ENCODE measurements at regions of chr16 and their contacts with region 1.

Region 1: GRCh38 chr16:64356267-64356666 is 765.6 kb downstream of the CDH11 start:
- DNase-seq: peak; percentile 87
- ATAC-seq: peak; percentile 91
- H3K4me3 ChIP-seq: no peak overlapping the region
- H3K27ac ChIP-seq: no peak overlapping the region
- H3K4me1 ChIP-seq: no peaks in the 10 kb centered on the region
- H3K27me3 ChIP-seq: no peaks in the 10 kb centered on the region
- CTCF ChIP-seq: no peak
- POLR2A ChIP-seq: no peak
- RAD21 ChIP-seq: no peak

Region 2: DNA sequence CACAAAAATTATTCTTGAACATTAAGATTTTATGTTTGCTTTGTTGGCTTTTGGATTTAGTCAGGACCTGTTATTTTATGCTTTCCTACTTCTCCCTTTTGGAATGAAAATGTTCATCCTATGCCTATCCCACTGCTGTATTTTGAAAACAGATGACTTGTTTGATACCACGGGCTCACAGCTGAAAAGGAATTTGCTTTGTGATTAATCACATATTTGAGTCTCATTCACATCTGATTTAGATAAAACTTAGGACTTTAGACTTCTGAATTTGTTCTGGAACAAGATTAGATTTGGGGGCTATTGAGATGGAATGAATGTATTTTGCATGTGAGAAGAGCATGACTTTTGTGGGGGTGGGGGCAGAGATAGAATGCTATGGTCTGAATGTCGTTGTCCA is 247.0 kb before region 1 on chr16:
- CTCF ChIA-PET with region 1: no interaction called
- POLR2A ChIA-PET with region 1: no interaction called
- dilution Hi-C with region 1: no loop called
- in situ Hi-C with region 1: no loop called
- intact Hi-C with region 1: no loop called
- DNase-seq: no peak
- ATAC-seq: no peak
- H3K4me3 ChIP-seq: no peak overlapping the region
- H3K27ac ChIP-seq: no peak overlapping the region
- H3K4me1 ChIP-seq: no peaks in the 10 kb centered on the region
- H3K27me3 ChIP-seq: no peaks in the 10 kb centered on the region
- CTCF ChIP-seq: no peak
- POLR2A ChIP-seq: no peak
- RAD21 ChIP-seq: no peak

Region 3: GRCh38 chr16:64292953-64293352 is 63.3 kb before region 1 on chr16:
- CTCF ChIA-PET with region 1: no interaction called
- POLR2A ChIA-PET with region 1: no interaction called
- dilution Hi-C with region 1: no loop called
- in situ Hi-C with region 1: no loop called
- intact Hi-C with region 1: no loop called
- DNase-seq: no peak
- ATAC-seq: no peak
- H3K4me3 ChIP-seq: no peak overlapping the region
- H3K27ac ChIP-seq: no peak overlapping the region
- H3K4me1 ChIP-seq: no peaks in the 10 kb centered on the region
- H3K27me3 ChIP-seq: no peaks in the 10 kb centered on the region
- CTCF ChIP-seq: no peak
- POLR2A ChIP-seq: no peak
- RAD21 ChIP-seq: no peak

Region 4: GRCh38 chr16:64440421-64440831 is 84.2 kb after region 1 on chr16:
- CTCF ChIA-PET with region 1: no interaction called
- POLR2A ChIA-PET with region 1: no interaction called
- dilution Hi-C with region 1: no loop called
- in situ Hi-C with region 1: no loop called
- intact Hi-C with region 1: loop called (anchors 5 kb)
- DNase-seq: peak; percentile 99
- ATAC-seq: peak; percentile 97
- H3K4me3 ChIP-seq: no peak overlapping the region
- H3K27ac ChIP-seq: no peak overlapping the region
- H3K4me1 ChIP-seq: peaks cover 2% of the 10 kb centered on the region
- H3K27me3 ChIP-seq: no peaks in the 10 kb centered on the region
- CTCF ChIP-seq: no peak
- POLR2A ChIP-seq: no peak
- RAD21 ChIP-seq: peak; percentile 29; the same call in 1 of the 2 replicates

Region 5: GRCh38 chr16:66175636-66176035 is 1819.4 kb after region 1 on chr16:
- CTCF ChIA-PET with region 1: no interaction called
- POLR2A ChIA-PET with region 1: no interaction called
- dilution Hi-C with region 1: no loop called
- in situ Hi-C with region 1: no loop called
- intact Hi-C with region 1: no loop called
- DNase-seq: no peak
- ATAC-seq: no peak
- H3K4me3 ChIP-seq: no peak overlapping the region
- H3K27ac ChIP-seq: no peak overlapping the region
- H3K4me1 ChIP-seq: no peaks in the 10 kb centered on the region
- H3K27me3 ChIP-seq: peaks cover 3% of the 10 kb centered on the region; the same call in 1 of the 2 replicates
- CTCF ChIP-seq: no peak
- POLR2A ChIP-seq: no peak
- RAD21 ChIP-seq: no peak

Measured in IMR-90 (cell line).